Esophagus muscularis mucosa (tissue), 4 donors: ENCODE measurements at regions of chr9 and their contacts with region 1.

Region 1: DNA sequence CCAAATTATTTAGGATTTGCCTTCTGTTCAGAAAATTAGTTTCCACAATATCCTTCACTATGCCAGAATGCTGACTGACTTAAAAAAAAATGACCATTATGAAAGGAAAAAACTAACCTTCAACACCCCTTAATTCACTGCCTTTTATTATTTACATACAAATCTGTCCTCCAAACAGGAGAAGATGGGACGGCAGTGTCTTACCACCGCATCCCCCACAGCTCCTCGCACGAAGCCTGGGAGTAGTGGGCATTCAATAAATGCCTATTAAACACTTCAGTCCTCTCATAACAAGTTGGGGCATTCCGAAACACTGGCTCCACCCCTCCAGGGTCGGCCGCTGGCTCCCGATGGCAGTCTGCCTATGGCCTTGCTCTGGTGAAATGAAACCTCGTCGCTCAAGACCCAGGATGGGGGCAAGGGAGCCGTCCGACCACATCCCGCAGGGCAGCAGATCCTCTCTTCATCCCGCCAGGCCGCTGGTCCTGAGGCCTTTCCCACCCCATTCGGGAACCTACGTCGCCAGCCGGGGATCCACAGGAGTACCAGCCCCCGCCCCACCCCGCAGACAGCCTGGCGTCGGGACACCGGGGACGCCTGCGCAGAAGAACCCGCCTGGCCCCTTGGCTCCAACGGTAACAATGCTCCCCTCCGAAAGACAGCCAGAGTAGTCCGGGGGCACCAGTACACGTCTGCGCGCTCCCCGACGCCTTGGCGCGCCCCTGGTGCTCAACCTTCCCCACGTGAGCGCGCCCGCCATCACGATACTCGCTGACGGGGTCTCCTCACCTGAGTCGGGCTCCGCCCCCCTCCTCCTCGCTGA is 613 bp downstream of the ZBTB5 start:
- DNase-seq: peak; percentile 97
- H3K4me3 ChIP-seq: peak overlapping the region; percentile 72 to 92 (median 88)
- H3K27ac ChIP-seq: peak overlapping the region; percentile 96 to 100 (median 98)
- H3K4me1 ChIP-seq: peaks cover 11 to 51% (median 47%) of the 10 kb centered on the region in 4 donors
- H3K27me3 ChIP-seq: no peaks in the 10 kb centered on the region
- CTCF ChIP-seq: no peak
- EP300 ChIP-seq: no peak
- POLR2A ChIP-seq: peak; percentile 9

Region 2: GRCh38 chr9:37410969-37411785 is 53.5 kb before region 1 on chr9:
- intact Hi-C with region 1: loop called (anchors 5 kb)
- DNase-seq: no peak
- H3K4me3 ChIP-seq: no peak overlapping the region
- H3K27ac ChIP-seq: no peak overlapping the region
- H3K4me1 ChIP-seq: peaks cover 4 to 17% (median 16%) of the 10 kb centered on the region in 4 donors
- H3K27me3 ChIP-seq: no peaks in the 10 kb centered on the region
- CTCF ChIP-seq: no peak
- EP300 ChIP-seq: no peak
- POLR2A ChIP-seq: no peak

Region 3: DNA sequence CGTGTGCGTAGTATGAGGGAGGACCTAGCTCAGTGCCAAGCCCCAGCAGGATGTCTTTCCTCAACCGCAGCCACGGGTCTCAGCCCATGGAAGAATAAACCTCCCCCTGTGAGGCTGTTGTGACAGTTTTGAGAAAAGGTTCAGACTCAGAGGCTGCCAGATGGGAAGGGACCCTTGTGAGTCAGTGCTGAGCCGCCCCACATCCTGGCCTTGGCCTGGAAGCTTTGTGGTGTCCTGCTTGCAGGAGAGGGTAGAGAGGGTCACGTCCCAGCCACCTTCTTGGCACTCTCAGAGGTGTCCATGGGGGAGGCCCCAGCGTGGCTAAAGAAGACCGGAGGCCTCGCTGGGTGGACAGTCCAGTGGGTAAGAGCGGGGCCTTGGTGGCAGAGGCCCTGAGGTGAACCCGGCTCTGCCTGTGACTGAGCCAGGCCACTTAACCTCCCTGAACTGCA is 39.3 kb before region 1 on chr9:
- intact Hi-C with region 1: loop called (anchors 5 kb)
- DNase-seq: no peak
- H3K4me3 ChIP-seq: no peak overlapping the region
- H3K27ac ChIP-seq: no peak overlapping the region
- H3K4me1 ChIP-seq: peaks cover 27 to 36% (median 34%) of the 10 kb centered on the region in 4 donors
- H3K27me3 ChIP-seq: no peaks in the 10 kb centered on the region
- CTCF ChIP-seq: no peak
- EP300 ChIP-seq: no peak
- POLR2A ChIP-seq: no peak